ENCODE measurements at regions of chr5 and their contacts with region 1.

Region 1: DNA sequence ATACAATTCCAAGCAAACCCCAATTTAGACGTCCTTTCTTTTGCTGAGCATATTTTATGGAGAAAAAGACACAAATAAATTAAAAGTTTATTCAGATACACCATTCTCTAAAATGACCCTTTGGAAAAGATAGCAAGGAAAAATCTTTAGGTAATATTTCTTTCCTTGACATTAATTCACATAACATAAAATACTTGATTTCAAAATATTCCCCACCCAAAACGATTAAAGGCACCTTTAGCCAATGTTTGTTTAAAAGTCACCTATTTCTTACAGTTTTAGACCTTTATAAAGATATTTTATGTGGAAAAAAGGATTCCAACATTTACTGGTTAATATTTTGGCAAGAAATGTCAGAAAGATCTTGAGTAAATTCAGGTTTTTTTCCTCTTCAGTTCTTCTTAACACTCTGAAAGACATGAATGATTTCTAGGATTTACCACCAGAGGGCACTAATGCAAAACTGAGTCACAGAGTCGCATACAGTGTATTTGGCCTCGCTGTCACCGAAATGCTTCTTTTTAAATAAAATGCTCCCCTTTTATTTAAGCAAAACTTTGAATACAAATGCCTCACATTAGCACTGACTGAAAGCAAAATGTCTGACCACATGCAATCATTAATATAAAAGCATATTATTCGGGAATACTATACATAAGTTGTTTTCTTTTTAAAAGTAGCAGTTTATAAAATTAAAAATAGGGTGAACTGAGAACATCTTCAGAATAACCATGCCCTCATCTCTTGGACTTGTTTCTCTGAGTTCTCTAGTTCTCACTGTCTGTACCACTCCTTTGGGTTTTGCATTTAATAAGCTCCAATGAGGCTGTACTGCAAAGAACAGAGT is 122.5 kb downstream of the SLC1A3 start:
- DNase-seq: peak; percentile 19
- H3K4me3 ChIP-seq: no peak overlapping the region
- CTCF ChIP-seq: peak; percentile 49

Region 2: GRCh38 chr5:36651761-36652685 is 76.9 kb before region 1 on chr5:
- CTCF ChIA-PET with region 1: no interaction called
- POLR2A ChIA-PET with region 1: no interaction called
- DNase-seq: no peak
- H3K4me3 ChIP-seq: no peak overlapping the region
- CTCF ChIP-seq: no peak

Region 3: DNA sequence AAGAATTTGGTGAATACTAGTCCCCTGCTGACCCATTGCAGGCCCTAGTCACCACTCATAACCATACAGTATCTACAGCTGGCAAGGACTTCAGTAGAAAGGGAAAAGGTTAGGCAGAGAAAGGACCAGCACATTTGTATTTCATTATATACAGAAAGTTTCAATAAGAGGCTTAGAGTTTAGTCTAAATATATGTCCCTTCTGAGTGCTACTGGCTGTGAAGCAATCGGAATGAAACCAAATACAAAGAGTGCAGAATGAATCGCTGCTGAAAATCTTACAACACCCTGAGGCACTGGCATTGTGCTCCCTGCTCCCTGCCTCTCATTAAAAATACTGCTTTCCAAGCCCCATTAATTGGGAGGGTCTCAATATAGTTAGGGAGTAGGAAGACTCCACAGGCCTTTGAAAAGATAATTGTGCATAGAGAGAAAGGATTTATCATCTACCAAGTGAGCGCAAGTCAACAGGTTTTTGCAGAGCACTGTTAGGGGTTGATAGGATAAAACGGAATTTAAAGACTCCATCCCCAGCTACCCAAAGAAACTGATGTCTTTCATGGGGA is 11.7 kb before region 1 on chr5:
- CTCF ChIA-PET with region 1: interaction called, 12 read pairs
- POLR2A ChIA-PET with region 1: no interaction called
- DNase-seq: no peak
- H3K4me3 ChIP-seq: no peak overlapping the region
- CTCF ChIP-seq: no peak

Region 4: DNA sequence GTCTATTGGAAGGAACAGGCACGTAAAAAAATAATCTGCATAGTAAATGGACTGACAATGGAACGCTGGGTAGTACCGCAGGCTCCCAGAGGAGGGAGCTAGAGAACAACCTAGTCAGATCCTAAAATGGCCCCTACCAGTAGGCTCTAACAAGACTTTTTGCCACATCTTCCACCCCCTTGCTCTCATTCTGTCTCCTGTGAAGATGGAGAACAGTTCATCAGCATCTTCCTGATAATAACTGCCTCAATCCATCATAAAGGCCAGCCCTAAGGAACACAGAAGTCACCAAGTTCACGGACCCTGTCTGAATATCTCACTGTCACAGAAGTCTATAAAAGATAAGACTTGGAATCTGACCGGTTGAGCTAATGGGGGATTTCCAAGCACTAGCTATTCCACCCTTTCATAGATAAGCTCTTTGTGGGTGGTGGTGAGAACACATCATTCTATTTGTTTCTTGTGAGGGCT is 10.9 kb after region 1 on chr5:
- CTCF ChIA-PET with region 1: interaction called, 50 read pairs
- POLR2A ChIA-PET with region 1: no interaction called
- DNase-seq: no peak
- H3K4me3 ChIP-seq: no peak overlapping the region
- CTCF ChIP-seq: peak; percentile 71

Region 5: DNA sequence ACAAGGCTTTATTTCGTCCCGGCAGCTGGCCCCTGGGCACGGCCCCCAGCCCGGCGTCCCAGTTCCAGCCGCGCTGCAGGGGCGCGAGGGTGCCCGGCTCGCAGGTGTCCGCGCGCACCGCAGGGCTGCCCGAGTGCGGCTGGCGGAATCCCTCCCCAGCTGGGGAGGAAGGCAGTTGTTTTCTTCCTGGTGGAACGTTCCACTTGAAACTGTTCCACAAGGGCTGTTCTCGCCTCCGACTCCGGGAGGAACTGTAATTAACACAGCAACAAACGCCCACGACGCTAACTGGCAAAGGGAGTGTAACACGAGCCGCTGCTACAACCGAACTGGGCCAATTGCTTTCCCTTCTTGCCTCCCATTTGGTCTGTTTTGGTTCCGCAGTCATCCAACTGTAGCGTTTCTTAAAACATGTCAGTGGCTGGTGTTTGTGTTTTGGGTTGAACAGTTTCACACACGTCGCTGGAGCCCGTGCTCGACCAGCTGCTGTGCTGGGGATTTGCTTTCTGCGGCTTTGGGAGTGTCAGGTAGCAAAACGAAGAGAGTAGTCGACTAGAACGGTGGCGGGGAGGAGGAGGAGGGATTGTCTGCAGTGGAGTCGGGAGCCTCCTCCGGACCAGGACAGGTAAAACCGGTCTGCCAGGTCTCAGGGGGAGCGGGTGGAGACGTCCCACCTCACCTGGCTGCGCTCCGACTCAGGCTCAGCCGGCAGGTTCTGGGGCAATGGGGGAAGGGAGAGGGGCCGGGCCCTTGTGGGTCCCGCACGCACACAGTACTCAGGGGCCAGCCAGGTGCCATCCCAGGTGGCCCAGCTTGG is 16.1 kb after region 1 on chr5:
- CTCF ChIA-PET with region 1: interaction called, 50 read pairs
- POLR2A ChIA-PET with region 1: no interaction called
- DNase-seq: no peak
- H3K4me3 ChIP-seq: peak overlapping the region; percentile 61
- CTCF ChIP-seq: no peak

Region 6: GRCh38 chr5:36870399-36871040 is 141.6 kb after region 1 on chr5:
- CTCF ChIA-PET with region 1: interaction called, 17 read pairs
- POLR2A ChIA-PET with region 1: no interaction called
- DNase-seq: no peak
- H3K4me3 ChIP-seq: no peak overlapping the region
- CTCF ChIP-seq: peak; percentile 47